ENCODE measurements at regions of chr9 and their contacts with region 1.

Region 1: DNA sequence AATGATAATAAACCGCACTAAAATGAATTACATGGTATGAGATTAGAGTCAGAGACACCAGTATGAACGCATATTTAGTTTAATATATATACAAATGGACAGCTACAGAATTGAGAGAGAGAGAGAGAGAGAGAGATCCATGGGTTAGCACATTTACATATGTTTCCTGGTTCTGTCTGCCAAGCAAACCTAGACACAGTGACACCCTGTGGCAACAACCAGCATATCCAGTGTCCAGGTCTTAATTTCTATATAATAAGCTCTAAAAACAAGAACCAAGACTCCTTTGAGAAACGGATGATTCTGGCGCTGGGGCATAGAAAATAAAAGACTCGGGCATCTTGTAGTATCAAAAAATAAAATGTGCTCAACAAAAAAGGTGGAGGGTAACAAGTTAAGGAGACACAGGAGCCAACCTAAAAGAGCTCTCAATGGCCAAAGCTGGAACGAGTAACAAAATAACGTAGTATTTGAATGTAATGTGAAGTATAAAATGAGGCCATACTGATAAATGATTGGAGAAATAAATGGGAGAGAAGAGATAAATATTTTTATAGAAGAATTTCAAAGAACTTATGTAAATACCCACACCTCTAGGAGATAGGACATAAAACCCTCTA is 84.5 kb downstream of the RFX3 start:
- DNase-seq: peak in 1 of 2 donors; percentile 72
- ATAC-seq: peak; percentile 79 to 94 (median 93)
- H3K4me3 ChIP-seq: no peak overlapping the region
- H3K4me3 Mint-ChIP-seq: no peak overlapping the region
- H3K27ac ChIP-seq: no peak overlapping the region
- H3K27ac Mint-ChIP-seq: no peak overlapping the region
- H3K4me1 ChIP-seq: no peaks in the 10 kb centered on the region
- H3K4me1 Mint-ChIP-seq: peaks cover 12% of the 10 kb centered on the region in 2 donors
- H3K27me3 ChIP-seq: no peaks in the 10 kb centered on the region
- H3K27me3 Mint-ChIP-seq: no peaks in the 10 kb centered on the region
- CTCF ChIP-seq: peak; percentile 65

Region 2: DNA sequence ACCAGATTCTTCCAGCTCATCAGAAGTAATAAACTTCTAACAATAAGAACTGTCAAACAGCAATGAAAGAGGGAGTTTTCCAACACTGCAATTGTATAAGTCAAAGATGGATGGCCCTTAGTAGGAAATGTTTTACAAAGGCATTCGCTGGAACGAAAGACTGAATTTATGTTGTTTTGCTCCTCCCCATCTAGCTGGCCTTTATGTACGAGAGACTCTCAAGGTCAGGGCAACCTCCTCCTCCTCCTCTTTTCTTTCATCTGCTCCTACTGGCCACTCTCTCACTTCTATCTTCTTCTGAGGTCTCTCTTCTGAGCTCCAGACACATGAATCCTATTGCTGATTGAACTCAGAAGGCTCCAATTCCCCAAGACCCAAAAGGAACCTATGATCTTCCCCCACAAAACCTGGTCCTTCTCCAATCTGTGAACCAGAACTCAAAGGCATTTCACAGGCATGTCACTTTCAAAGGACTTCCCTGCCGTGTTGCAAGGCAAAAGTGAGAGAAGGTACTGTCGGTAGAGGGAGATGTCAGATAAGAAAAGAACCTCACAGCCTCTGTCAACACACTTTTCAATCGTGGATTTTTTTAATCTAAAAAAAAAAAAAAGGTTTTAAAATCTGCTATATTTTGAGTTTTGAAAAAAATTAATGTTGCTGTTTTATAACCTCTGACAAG is 568.9 kb before region 1 on chr9:
- intact Hi-C with region 1: loop called (anchors 2 kb)
- DNase-seq: peak in 1 of 2 donors; percentile 62
- ATAC-seq: peak in 2 of 3 donors; percentile 58 to 67
- H3K4me3 ChIP-seq: no peak overlapping the region
- H3K4me3 Mint-ChIP-seq: no peak overlapping the region
- H3K27ac ChIP-seq: no peak overlapping the region
- H3K27ac Mint-ChIP-seq: no peak overlapping the region
- H3K4me1 ChIP-seq: peaks cover 3% of the 10 kb centered on the region
- H3K4me1 Mint-ChIP-seq: peaks cover 0 to 4% of the 10 kb centered on the region in 2 donors
- H3K27me3 ChIP-seq: no peaks in the 10 kb centered on the region
- H3K27me3 Mint-ChIP-seq: peaks cover 10 to 20% of the 10 kb centered on the region in 2 donors
- CTCF ChIP-seq: peak; percentile 38

Region 3: GRCh38 chr9:3370715-3371114 is 70.6 kb before region 1 on chr9:
- intact Hi-C with region 1: no loop called
- DNase-seq: no peak
- ATAC-seq: no peak
- H3K4me3 ChIP-seq: no peak overlapping the region
- H3K4me3 Mint-ChIP-seq: no peak overlapping the region
- H3K27ac ChIP-seq: no peak overlapping the region
- H3K27ac Mint-ChIP-seq: no peak overlapping the region
- H3K4me1 ChIP-seq: no peaks in the 10 kb centered on the region
- H3K4me1 Mint-ChIP-seq: peaks cover 18 to 25% of the 10 kb centered on the region in 2 donors
- H3K27me3 ChIP-seq: no peaks in the 10 kb centered on the region
- H3K27me3 Mint-ChIP-seq: no peaks in the 10 kb centered on the region
- CTCF ChIP-seq: no peak

Measured in natural killer cell (primary cell).